Thyroid gland (tissue), 4 donors: ENCODE measurements at regions of chr4 and their contacts with region 1.

Region 1: DNA sequence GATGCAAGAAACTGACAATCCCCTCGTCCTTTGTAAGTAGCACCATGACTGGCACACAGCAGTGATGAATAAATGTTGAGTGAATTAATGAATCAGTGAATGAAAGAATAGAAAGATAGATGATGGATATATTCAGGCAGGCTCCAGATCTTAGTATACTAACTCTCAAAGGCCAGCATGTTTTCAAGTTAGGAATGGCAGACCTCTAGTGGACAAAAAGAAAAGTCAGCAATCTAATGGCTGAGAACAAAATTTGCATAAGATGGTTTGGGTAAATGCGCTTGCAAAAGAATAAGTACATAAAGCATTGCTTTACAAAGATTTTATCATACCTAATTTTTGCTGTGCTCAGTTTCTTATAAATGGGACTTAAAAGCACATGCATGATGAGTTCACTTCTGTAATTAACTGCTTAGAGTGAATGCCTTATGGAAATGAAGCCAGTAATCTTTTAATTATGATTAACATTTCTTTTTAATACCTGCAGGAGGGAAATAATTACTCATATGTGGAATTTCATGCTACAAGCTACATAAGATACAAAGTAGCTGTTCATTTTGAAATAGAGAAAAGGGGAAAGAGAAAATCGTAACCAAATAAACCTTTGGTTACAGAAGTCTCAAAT is 126.9 kb upstream of the GPRIN3 start:
- DNase-seq: no peak
- H3K4me3 ChIP-seq: no peak overlapping the region
- H3K27ac ChIP-seq: no peak overlapping the region
- H3K4me1 ChIP-seq: no peaks in the 10 kb centered on the region
- H3K27me3 ChIP-seq: no peaks in the 10 kb centered on the region
- CTCF ChIP-seq: peak; percentile 48 to 82 (median 65)
- POLR2A ChIP-seq: no peak

Region 2: DNA sequence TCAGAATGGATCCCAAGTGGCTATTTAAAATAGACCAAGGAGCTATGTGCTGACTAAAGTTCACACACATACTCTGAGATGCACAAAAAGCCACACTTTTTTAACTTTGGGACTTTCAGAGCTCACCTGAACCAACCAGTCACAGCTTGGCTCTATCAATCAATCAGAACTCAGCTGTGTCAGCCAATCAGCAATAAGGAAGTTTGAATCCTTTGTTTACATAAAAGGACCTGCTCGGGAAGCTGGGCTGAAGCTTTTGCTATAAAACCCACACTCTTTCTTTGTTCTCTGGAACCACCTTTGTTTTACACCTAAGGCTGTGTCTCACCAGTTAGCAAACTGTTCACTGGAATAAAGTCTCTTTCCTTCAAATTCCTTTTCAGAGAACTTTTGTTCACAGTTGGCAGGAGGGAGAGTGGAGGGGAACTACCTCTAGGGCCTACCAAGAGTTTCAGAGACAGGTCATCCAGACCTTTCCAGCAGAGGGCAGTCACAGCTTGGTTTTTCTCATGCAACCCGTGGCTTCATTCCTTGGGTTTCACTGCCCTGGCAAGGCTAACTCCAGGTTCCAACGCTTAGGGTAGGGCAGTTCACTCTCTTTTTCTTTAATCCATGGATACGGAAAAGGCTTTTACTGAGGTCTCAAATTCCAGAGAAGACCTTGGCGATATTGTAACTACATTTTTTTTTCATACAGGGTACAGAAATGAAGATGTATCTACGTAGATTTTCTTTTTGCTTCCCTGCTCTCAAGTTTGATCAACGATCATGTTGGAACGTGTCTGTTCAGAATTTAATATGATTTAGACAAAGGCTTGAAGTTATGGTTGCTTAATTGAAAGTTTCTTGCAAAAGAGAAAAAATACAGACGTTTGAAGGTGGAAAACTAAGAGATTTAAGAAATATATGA is 207.6 kb before region 1 on chr4:
- intact Hi-C with region 1: loop called (anchors 5 kb)
- DNase-seq: peak; percentile 88 to 89
- H3K4me3 ChIP-seq: no peak overlapping the region
- H3K27ac ChIP-seq: peak overlapping the region in 1 of 3 donors; percentile 40
- H3K4me1 ChIP-seq: peaks cover 0 to 10% of the 10 kb centered on the region in 2 donors
- H3K27me3 ChIP-seq: no peaks in the 10 kb centered on the region
- CTCF ChIP-seq: peak; percentile 45 to 88 (median 66)
- POLR2A ChIP-seq: no peak

Region 3: GRCh38 chr4:89254847-89255246 is 179.6 kb before region 1 on chr4:
- intact Hi-C with region 1: loop called (anchors 10 kb)
- DNase-seq: peak; percentile 20 to 31
- H3K4me3 ChIP-seq: no peak overlapping the region
- H3K27ac ChIP-seq: no peak overlapping the region
- H3K4me1 ChIP-seq: peaks cover 0 to 4% of the 10 kb centered on the region in 2 donors
- H3K27me3 ChIP-seq: no peaks in the 10 kb centered on the region
- CTCF ChIP-seq: peak; percentile 24 to 89 (median 59)
- POLR2A ChIP-seq: no peak

Region 4: GRCh38 chr4:89579771-89580170 is 145.3 kb after region 1 on chr4:
- intact Hi-C with region 1: no loop called
- DNase-seq: no peak
- H3K4me3 ChIP-seq: no peak overlapping the region
- H3K27ac ChIP-seq: no peak overlapping the region
- H3K4me1 ChIP-seq: no peaks in the 10 kb centered on the region
- H3K27me3 ChIP-seq: no peaks in the 10 kb centered on the region
- CTCF ChIP-seq: no peak
- POLR2A ChIP-seq: no peak